HepG2 (cell line): ENCODE measurements at regions of chr3 and their contacts with region 1.

Region 1: DNA sequence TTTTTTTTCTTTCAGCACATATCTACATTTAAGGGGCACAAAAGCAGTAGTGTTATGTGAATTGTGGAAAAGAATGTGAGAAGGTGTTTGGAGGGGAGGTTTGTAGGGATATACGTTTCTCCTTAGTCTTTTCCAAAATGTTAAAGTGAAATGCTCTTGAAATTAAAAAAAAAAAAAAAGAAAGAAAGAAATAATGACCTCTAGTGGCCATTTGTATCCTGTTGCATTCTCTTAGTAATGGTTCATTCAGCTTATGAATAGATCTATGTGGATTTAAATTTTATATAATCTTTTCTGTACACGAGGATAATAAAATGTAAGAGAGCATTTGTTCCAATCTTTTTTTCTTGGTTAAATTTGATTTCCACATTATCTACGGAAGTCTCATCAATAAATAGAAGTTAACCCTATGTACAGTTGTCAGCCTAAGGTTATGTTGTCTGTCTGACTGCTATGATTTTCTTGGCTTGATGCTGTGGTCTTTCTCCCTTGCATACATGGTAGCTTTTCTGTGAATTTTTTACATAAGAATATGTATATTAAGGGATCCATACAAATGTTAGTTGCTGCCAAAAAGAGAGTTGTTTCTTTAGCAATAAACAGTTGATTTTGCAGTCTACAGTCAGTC is 1.7 kb downstream of the P2RY13 start:
- DNase-seq: no peak
- ATAC-seq: peak; percentile 32; the same call in 1 of the 3 replicates
- H3K4me3 ChIP-seq: no peak overlapping the region
- H3K27ac ChIP-seq: no peak overlapping the region
- H3K4me1 ChIP-seq: no peaks in the 10 kb centered on the region
- H3K27me3 ChIP-seq: no peaks in the 10 kb centered on the region
- CTCF ChIP-seq: 0 out of 2 replicates have a peak, but pooled peaks have one; percentile 19
- EP300 ChIP-seq: no peak
- POLR2A ChIP-seq: no peak
- RAD21 ChIP-seq: no peak

Region 2: GRCh38 chr3:151227807-151228665 is 99.6 kb before region 1 on chr3:
- CTCF ChIA-PET with region 1: interaction called, 11 read pairs
- POLR2A ChIA-PET with region 1: no interaction called
- in situ Hi-C with region 1: no loop called
- intact Hi-C with region 1: loop called (anchors 1 kb)
- DNase-seq: peak; percentile 67
- ATAC-seq: peak; percentile 94
- H3K4me3 ChIP-seq: no peak overlapping the region
- H3K27ac ChIP-seq: no peak overlapping the region
- H3K4me1 ChIP-seq: peaks cover 34% of the 10 kb centered on the region
- H3K27me3 ChIP-seq: no peaks in the 10 kb centered on the region; a peak in 1 of 5 replicates
- CTCF ChIP-seq: peak; percentile 92
- EP300 ChIP-seq: no peak
- POLR2A ChIP-seq: no peak
- RAD21 ChIP-seq: peak; percentile 93

Region 3: DNA sequence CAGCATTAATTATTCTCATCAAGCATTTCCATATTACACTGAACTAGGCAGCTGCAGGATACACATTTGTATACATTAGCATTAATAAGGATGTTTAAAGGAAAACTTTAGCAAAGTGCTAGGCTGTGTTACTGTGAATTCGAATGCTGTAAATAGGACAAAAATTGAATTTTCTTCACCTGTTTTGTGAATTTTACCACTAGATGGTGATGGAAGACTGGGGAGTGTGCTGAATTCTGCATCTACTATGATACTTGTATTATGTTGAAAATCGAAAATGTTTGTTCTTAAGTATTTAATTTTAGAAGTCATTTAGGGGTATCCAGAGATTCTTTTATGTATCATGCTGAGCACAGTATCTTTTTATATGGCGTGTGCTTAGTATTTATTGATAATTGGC is 37.0 kb before region 1 on chr3:
- CTCF ChIA-PET with region 1: no interaction called
- POLR2A ChIA-PET with region 1: no interaction called
- in situ Hi-C with region 1: no loop called
- intact Hi-C with region 1: loop called (anchors 1 kb)
- DNase-seq: no peak
- ATAC-seq: no peak
- H3K4me3 ChIP-seq: no peak overlapping the region
- H3K27ac ChIP-seq: no peak overlapping the region
- H3K4me1 ChIP-seq: 0 out of 2 replicates have a peak, but pooled peaks cover 5% of the 10 kb centered on the region
- H3K27me3 ChIP-seq: no peaks in the 10 kb centered on the region
- CTCF ChIP-seq: peak; percentile 37
- EP300 ChIP-seq: no peak
- POLR2A ChIP-seq: no peak
- RAD21 ChIP-seq: no peak